ENCODE measurements at regions of chr22 and their contacts with region 1.

Region 1: GRCh38 chr22:26416670-26417250 is 12.3 kb upstream of the ASPHD2 start:
- DNase-seq: peak; percentile 78
- H3K4me3 Mint-ChIP-seq: no peak overlapping the region
- H3K27ac Mint-ChIP-seq: no peak overlapping the region
- H3K4me1 Mint-ChIP-seq: peaks cover 27% of the 10 kb centered on the region
- H3K27me3 Mint-ChIP-seq: no peaks in the 10 kb centered on the region
- CTCF ChIP-seq: no peak

Region 2: DNA sequence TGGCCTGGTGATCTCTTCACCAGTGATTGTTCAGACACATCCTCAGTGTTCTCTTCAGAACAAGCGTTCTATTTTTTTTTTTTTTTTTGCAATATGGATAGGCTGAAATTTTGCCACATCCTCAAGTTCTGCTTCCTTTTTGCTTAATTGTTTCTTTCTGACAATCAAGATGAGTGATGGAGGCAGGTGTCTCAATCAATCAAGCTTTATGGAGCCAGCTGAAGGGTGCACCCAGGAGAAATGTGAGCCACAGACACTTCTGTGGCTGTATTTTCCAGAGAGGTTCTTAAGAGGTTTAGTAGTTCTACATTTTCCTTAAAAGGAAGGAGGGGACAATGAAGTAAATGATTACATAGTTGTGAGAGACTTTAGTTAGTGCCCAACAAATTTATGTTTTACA is 31.6 kb before region 1 on chr22:
- CTCF ChIA-PET with region 1: interaction called, 10 read pairs
- POLR2A ChIA-PET with region 1: no interaction called
- intact Hi-C with region 1: no loop called
- DNase-seq: no peak
- H3K4me3 Mint-ChIP-seq: no peak overlapping the region
- H3K27ac Mint-ChIP-seq: no peak overlapping the region
- H3K4me1 Mint-ChIP-seq: no peaks in the 10 kb centered on the region
- H3K27me3 Mint-ChIP-seq: peaks cover 80% of the 10 kb centered on the region
- CTCF ChIP-seq: no peak

Region 3: GRCh38 chr22:26398741-26399153 is 18.0 kb before region 1 on chr22:
- CTCF ChIA-PET with region 1: interaction called, 3 read pairs
- POLR2A ChIA-PET with region 1: interaction called, 3 read pairs
- intact Hi-C with region 1: loop called (anchors 2 kb)
- DNase-seq: peak; percentile 78
- H3K4me3 Mint-ChIP-seq: no peak overlapping the region
- H3K27ac Mint-ChIP-seq: no peak overlapping the region
- H3K4me1 Mint-ChIP-seq: peaks cover 5% of the 10 kb centered on the region
- H3K27me3 Mint-ChIP-seq: peaks cover 29% of the 10 kb centered on the region
- CTCF ChIP-seq: peak; percentile 81

Region 4: DNA sequence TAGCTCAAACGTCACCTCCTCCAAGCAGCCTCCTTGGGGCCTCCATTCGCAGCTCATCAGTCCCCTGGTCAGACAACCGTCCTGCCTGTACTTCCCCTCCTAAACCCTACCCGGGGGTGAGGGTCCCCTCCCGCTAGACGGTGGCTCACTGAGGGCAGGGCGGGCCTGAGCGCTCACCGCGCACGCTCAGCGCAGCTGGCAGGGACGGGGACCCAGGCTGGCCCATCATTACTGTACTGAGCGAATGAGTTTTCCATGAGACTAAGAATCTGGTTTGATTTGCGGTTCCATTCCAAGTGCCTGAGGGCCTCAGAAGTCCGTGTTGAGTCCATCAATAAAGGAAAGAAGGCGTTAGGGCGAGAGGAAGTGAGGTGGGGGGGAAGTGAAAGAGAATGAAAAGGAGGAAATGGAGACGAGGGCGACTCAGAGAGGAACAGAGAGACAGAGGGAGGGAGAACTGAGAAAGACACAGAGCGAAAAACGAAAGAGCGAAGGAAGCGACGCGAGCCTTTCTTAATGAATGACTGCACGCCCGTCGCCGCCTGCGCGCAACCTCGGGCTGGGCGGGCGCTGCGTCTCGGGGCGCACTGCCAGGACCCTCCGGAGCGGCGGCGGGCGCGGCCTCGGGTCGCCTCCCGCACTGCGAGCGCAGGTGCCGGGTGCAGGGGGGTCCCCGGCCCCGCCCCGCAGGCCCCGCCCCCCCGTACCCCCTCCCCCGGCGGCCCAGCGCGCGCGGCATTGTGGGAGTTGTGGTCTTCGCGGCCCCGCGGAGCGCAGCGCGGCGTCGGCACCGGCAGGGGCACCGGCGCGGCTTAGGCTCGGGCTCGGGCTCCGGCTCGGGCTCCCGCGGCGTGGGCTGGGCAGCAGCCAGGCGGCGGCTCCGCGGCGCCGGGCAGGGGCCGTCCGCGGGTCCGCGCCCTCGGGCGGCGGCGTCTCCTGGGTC is 12.0 kb after region 1 on chr22 and contains the start of gene ASPHD2:
- CTCF ChIA-PET with region 1: no interaction called
- POLR2A ChIA-PET with region 1: interaction called, 12 read pairs
- intact Hi-C with region 1: no loop called
- DNase-seq: peak; percentile 39
- H3K4me3 Mint-ChIP-seq: peak within 1 kb of the TSS; percentile 96
- H3K27ac Mint-ChIP-seq: peak within 1 kb of the TSS; percentile 84
- H3K4me1 Mint-ChIP-seq: peaks cover 15% of the 10 kb centered on the region
- H3K27me3 Mint-ChIP-seq: peaks cover 19% of the 10 kb centered on the region
- CTCF ChIP-seq: no peak
- total RNA-seq, gene ASPHD2: 4.0 and 4.8 TPM in 2 replicates